Breast epithelium (tissue), 4 donors: ENCODE measurements at regions of chr10 and their contacts with region 1.

Region 1: GRCh38 chr10:62153191-62153590 is 115.5 kb downstream of the RTKN2 start:
- DNase-seq: no peak
- H3K4me3 ChIP-seq: no peak overlapping the region
- H3K27ac ChIP-seq: no peak overlapping the region
- H3K4me1 ChIP-seq: no peaks in the 10 kb centered on the region
- H3K27me3 ChIP-seq: no peaks in the 10 kb centered on the region
- CTCF ChIP-seq: no peak
- POLR2A ChIP-seq: no peak

Region 2: GRCh38 chr10:62093863-62094291 is 59.3 kb before region 1 on chr10:
- intact Hi-C with region 1: no loop called
- DNase-seq: no peak
- H3K4me3 ChIP-seq: no peak overlapping the region
- H3K27ac ChIP-seq: peak overlapping the region; percentile 71 to 89
- H3K4me1 ChIP-seq: peaks cover 7 to 29% of the 10 kb centered on the region in 2 donors
- H3K27me3 ChIP-seq: no peaks in the 10 kb centered on the region
- CTCF ChIP-seq: no peak
- POLR2A ChIP-seq: no peak

Region 3: DNA sequence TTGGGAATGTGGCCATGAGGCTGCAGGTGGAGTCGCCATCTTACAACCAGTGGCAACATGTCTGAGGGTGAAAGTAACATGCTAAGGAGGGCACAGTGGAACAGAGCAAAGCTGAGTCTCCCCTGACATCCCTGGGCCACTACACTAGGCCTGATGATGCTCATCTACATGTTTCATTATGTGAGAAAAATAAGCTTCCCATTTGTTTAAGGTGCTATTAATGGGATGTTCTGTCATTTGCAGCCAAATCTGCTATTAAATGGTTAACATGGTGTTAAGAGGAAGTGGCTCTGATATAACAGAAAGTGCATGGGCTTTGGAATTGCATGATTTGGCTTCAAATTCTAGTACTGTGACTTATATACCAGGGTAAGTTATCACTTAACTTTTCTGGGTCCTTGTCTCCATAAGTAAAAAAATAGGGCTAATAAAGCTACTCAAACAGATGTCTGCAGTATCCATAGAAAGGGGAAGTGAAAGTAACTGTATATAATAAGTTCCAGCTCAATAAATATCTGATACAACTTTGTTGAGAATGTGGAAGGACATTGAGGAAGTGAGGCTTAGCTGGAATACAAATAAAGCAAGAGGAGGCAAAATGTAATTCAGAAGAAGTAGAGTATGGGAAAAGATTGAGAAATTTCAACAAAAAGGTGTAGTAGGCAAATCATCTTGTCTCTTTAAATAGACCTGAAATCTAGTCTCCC is 43.5 kb before region 1 on chr10:
- intact Hi-C with region 1: loop called (anchors 10 kb)
- DNase-seq: no peak
- H3K4me3 ChIP-seq: no peak overlapping the region
- H3K27ac ChIP-seq: no peak overlapping the region
- H3K4me1 ChIP-seq: peaks cover 0 to 4% of the 10 kb centered on the region in 2 donors
- H3K27me3 ChIP-seq: no peaks in the 10 kb centered on the region
- CTCF ChIP-seq: no peak
- POLR2A ChIP-seq: no peak